ENCODE measurements at regions of chr5 and their contacts with region 1.

Region 1: DNA sequence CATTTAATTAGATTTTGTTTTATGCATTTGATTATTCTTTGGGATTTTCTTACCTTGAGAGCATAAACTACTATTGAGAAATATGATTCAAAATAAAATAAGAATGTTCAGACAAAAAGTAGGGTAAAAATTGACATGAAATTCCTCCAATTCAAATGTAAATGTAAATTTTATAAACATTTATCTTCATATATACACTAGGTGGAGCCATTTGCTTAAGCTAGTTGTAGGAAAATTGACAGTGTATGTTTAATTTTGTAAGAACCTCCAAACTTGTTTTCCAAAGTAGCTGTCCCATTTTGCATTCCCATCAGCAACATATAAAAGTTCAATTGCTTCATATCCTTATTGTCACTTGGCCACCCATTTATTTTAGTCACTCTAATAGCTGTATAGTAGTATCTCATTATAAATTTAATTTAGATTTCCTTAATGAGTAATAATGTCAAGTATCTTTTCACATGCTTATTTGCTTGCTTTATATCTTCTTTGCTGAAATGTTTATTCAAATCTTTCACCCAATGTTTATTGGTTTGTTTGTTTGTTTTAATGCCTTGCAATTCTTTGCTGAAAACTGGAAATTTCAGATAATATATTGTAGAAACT is 37.6 kb upstream of the SLCO6A1 start:
- DNase-seq: no peak
- ATAC-seq: no peak
- H3K4me3 ChIP-seq: no peak overlapping the region
- H3K27ac ChIP-seq: no peak overlapping the region
- H3K4me1 ChIP-seq: no peaks in the 10 kb centered on the region
- H3K27me3 ChIP-seq: no peaks in the 10 kb centered on the region
- CTCF ChIP-seq: no peak
- POLR2A ChIP-seq: no peak

Region 2: GRCh38 chr5:102511666-102512065 is 24.8 kb before region 1 on chr5:
- in situ Hi-C with region 1: no loop called
- intact Hi-C with region 1: no loop called
- DNase-seq: peak in 1 of 2 donors; percentile 30
- ATAC-seq: peak in 1 of 2 donors; percentile 26
- H3K4me3 ChIP-seq: no peak overlapping the region
- H3K27ac ChIP-seq: no peak overlapping the region
- H3K4me1 ChIP-seq: no peaks in the 10 kb centered on the region
- H3K27me3 ChIP-seq: no peaks in the 10 kb centered on the region
- CTCF ChIP-seq: no peak
- POLR2A ChIP-seq: no peak

Region 3: GRCh38 chr5:102755686-102756371 is 219.4 kb after region 1 on chr5:
- in situ Hi-C with region 1: no loop called
- intact Hi-C with region 1: no loop called
- DNase-seq: peak; percentile 59 to 77
- ATAC-seq: peak; percentile 54 to 67
- H3K4me3 ChIP-seq: peak overlapping the region; percentile 63 to 97 (median 88)
- H3K27ac ChIP-seq: peak overlapping the region; percentile 88 to 97 (median 92)
- H3K4me1 ChIP-seq: peaks cover 45% of the 10 kb centered on the region in 2 donors
- H3K27me3 ChIP-seq: no peaks in the 10 kb centered on the region
- CTCF ChIP-seq: no peak
- POLR2A ChIP-seq: peak; percentile 70 to 80

Region 4: DNA sequence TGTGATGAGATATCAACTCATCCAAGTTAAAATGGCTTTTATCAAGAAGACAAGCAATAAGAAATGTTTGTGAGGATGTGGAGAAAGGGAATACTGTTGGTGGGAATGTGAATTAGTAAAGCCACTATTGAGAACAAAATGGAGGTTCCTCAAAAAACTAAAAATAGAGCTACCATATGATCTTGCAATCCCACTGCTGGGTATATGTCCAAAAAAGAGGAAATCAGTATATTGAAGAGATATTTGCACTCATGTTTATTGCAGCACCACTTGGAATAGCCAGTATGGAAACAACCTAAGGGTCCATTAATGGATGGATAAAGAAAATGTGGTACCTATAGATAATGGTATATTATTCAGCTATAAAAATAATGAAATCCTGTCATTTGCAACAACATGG is 608.8 kb after region 1 on chr5:
- in situ Hi-C with region 1: no loop called
- intact Hi-C with region 1: loop called (anchors 10 kb)
- DNase-seq: no peak
- ATAC-seq: no peak
- H3K4me3 ChIP-seq: no peak overlapping the region
- H3K27ac ChIP-seq: no peak overlapping the region
- H3K4me1 ChIP-seq: no peaks in the 10 kb centered on the region
- H3K27me3 ChIP-seq: no peaks in the 10 kb centered on the region
- CTCF ChIP-seq: no peak
- POLR2A ChIP-seq: no peak

Measured in gastrocnemius medialis (tissue), 4 donors.